ENCODE measurements at regions of chr9 and their contacts with region 1.

Region 1: GRCh38 chr9:125407974-125408900 is 146.6 kb downstream of the GAPVD1 start:
- DNase-seq: peak; percentile 71 to 92
- H3K4me3 ChIP-seq: peak overlapping the region; percentile 46
- H3K4me1 ChIP-seq: peaks cover 5% of the 10 kb centered on the region; the same call in 1 of the 2 replicates
- H3K27me3 ChIP-seq: no peaks in the 10 kb centered on the region

Region 2: GRCh38 chr9:125460840-125461635 is 52.8 kb after region 1 on chr9:
- in situ Hi-C with region 1: no loop called
- DNase-seq: peak; percentile 77 to 92
- H3K4me3 ChIP-seq: no peak overlapping the region
- H3K4me1 ChIP-seq: peaks cover 30% of the 10 kb centered on the region
- H3K27me3 ChIP-seq: no peaks in the 10 kb centered on the region

Region 3: GRCh38 chr9:125558453-125559092 is 150.3 kb after region 1 on chr9:
- in situ Hi-C with region 1: no loop called
- DNase-seq: peak; percentile 73 to 75
- H3K4me3 ChIP-seq: no peak overlapping the region
- H3K4me1 ChIP-seq: peaks cover 9% of the 10 kb centered on the region
- H3K27me3 ChIP-seq: no peaks in the 10 kb centered on the region

Region 4: GRCh38 chr9:126232461-126232860 is 824.2 kb after region 1 on chr9:
- in situ Hi-C with region 1: loop called (anchors 5 kb)
- DNase-seq: no peak
- H3K4me3 ChIP-seq: no peak overlapping the region
- H3K4me1 ChIP-seq: no peaks in the 10 kb centered on the region
- H3K27me3 ChIP-seq: no peaks in the 10 kb centered on the region

Region 5: DNA sequence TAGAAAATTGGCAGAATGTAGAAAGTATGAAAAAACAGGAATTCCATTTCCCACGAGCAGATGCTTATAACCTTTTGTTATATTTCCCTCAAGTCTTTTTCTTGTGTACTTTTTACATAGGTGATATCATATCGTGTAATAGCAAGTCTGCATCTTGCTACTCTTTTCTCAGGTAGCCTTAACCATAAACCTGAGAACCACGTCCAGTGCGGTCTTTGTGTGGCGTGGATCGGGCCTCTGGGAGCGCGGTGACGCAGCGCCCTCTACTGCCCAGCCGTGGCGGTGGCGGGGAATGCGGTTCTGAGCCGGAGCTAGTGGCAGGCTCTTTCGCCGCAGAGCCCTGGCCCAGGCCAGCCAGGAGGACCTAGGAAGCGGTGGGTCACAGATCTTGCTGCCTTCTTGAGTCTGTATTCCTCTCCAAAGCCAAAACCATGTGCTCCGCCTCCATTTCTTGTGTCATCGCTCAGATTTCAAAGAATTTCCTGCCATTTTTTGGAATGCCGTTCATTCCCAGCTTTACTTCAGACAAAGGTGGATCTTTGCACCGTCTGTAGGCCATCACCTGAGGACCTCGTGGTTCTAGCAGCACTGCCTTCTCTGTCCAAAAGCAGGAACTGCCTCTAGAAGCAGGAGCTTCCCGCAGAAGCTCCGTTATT is 990.3 kb after region 1 on chr9:
- in situ Hi-C with region 1: loop called (anchors 5 kb)
- DNase-seq: peak; percentile 49 to 86
- H3K4me3 ChIP-seq: no peak overlapping the region
- H3K4me1 ChIP-seq: no peaks in the 10 kb centered on the region
- H3K27me3 ChIP-seq: no peaks in the 10 kb centered on the region

Region 6: DNA sequence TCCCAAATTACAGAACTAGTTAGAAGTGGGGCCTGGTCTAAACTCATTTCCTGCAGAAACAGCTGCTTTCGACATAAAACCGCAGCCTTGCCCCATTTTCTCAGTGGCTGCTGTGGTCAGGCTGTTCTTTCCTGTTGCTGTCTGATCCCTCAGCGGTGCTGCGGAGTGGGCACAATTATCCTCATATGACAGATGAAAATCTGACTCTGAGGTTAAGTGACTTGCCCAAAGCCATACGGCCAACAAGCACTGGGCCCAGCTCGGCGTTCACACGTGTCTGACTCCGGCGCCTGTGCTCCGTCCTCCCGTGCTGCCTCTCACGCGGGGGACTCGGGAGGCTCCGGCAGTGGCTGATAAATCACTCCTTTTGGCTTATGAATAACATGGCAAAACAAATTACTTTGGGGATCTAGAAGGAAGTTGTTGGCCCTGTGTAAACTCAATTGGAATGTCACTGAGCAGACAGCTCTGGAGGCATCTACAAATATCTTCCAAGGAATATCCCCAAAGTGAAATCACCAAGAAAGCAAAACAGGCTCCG is 1062.9 kb after region 1 on chr9:
- in situ Hi-C with region 1: loop called (anchors 10 kb)
- DNase-seq: no peak
- H3K4me3 ChIP-seq: no peak overlapping the region
- H3K4me1 ChIP-seq: peaks cover 14% of the 10 kb centered on the region
- H3K27me3 ChIP-seq: no peaks in the 10 kb centered on the region

Measured in HAP-1 (cell line).